ENCODE measurements at regions of chr17 and their contacts with region 1.

Region 1: GRCh38 chr17:82022981-82023374 is at the start of gene LRRC45:
- DNase-seq: peak; percentile 100
- H3K4me3 ChIP-seq: peak within 1 kb of the TSS; percentile 63 to 92 (median 88)
- H3K27ac ChIP-seq: peak within 1 kb of the TSS; percentile 15
- H3K4me1 ChIP-seq: peaks cover 32% of the 10 kb centered on the region
- H3K27me3 ChIP-seq: no peaks in the 10 kb centered on the region
- CTCF ChIP-seq: no peak
- total RNA-seq, gene LRRC45: 4.5 to 10.9 TPM

Region 2: DNA sequence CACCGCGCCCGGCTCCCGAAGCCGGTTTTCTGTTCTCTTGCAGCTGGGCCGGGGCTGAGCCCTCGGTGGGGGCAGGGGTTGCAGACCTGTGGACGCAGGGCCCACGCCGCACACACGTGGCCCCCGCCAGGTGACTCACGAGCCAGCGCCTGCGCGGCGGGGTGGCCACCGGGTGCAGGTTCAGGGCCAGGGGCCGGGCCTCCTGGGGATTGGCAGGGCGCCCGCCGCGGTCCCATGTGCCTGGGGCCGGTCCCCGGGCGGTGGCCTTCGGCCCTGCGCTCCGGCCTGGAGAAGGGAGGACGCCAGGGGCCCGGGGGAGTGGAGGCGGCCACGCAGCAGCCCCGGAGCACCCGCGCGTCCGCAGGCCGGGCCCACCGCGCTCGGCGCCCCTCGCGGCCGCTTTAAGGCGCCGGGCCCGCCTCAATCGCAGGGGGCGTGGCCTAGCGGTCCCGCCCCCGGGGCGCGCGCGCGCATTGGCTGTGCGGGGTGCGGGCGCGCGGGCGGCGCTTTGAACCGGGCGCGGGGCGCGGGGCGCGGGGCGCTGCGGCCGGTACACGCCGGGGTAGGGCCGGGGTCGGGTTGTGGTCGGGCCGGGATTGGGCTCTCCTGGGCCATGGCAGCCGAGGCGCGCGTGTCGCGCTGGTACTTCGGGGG is 311.0 kb before region 1 on chr17 and contains the start of gene SLC25A10:
- CTCF ChIA-PET with region 1: no interaction called
- dilution Hi-C with region 1: no loop called
- in situ Hi-C with region 1: no loop called
- intact Hi-C with region 1: loop called (anchors 5 kb)
- DNase-seq: peak; percentile 82
- H3K4me3 ChIP-seq: peak within 1 kb of the TSS; percentile 42 to 76 (median 66)
- H3K27ac ChIP-seq: peak within 1 kb of the TSS; percentile 19
- H3K4me1 ChIP-seq: peaks cover 28% of the 10 kb centered on the region
- H3K27me3 ChIP-seq: no peaks in the 10 kb centered on the region
- CTCF ChIP-seq: no peak
- total RNA-seq, gene SLC25A10: 13.0 to 19.1 TPM

Region 3: GRCh38 chr17:81911277-81911961 is 111.6 kb before region 1 on chr17 and contains the start of gene PCYT2:
- CTCF ChIA-PET with region 1: no interaction called
- dilution Hi-C with region 1: loop called (anchors 5 kb)
- in situ Hi-C with region 1: no loop called
- intact Hi-C with region 1: no loop called
- DNase-seq: peak; percentile 85
- H3K4me3 ChIP-seq: peak within 1 kb of the TSS; percentile 81 to 92 (median 83)
- H3K27ac ChIP-seq: peak within 1 kb of the TSS; percentile 19
- H3K4me1 ChIP-seq: peaks cover 12% of the 10 kb centered on the region
- H3K27me3 ChIP-seq: no peaks in the 10 kb centered on the region
- CTCF ChIP-seq: peak in 1 of 2 donors; percentile 2
- total RNA-seq, gene PCYT2: 23.5 to 48.7 TPM

Region 4: DNA sequence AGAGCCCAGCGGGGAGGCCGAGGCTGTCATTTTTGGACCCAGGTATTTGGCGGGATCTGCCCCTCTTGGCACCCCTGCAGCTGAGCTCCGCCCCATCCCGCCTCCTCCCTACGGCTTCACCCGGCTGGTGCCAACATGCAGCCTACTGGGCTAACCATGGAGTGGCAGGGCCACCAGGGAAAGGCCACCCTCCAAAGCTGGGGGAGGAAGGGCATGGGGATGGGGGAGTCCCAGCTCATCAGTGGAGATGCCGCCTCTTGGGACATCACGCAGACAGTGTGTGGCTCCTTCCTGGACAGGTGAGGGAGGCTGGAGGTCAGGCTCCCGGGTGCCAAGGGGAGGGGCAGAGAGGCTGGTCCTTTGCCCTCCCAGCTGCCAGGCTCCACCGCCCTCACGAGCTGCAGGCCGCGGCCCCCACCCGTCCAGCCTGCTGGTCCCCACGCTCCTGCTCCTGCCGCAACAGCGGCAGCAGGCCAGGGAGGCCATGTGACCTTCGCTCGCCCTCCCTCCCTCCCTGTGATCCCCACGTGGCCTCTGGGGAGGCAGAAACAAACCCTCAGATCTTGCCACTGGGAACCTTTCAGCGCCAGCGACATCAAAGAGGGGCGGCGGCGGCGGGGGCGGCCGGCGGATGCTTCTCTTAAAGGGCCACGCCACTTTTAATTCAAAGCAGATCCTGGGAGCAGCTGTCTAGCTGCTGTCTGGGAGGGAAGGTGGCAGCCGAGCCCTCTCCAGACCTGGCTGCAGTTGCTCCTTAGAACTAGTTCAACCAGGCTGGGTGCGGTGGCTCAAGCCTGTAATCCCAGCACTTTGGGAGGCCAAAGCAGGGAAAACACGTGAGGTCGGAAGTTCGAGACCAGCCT is 55.2 kb before region 1 on chr17:
- CTCF ChIA-PET with region 1: no interaction called
- dilution Hi-C with region 1: no loop called
- in situ Hi-C with region 1: loop called (anchors 5 to 10 kb)
- intact Hi-C with region 1: no loop called
- DNase-seq: no peak
- H3K4me3 ChIP-seq: no peak overlapping the region
- H3K27ac ChIP-seq: no peak overlapping the region
- H3K4me1 ChIP-seq: peaks cover 6% of the 10 kb centered on the region
- H3K27me3 ChIP-seq: no peaks in the 10 kb centered on the region
- CTCF ChIP-seq: no peak

Region 5: DNA sequence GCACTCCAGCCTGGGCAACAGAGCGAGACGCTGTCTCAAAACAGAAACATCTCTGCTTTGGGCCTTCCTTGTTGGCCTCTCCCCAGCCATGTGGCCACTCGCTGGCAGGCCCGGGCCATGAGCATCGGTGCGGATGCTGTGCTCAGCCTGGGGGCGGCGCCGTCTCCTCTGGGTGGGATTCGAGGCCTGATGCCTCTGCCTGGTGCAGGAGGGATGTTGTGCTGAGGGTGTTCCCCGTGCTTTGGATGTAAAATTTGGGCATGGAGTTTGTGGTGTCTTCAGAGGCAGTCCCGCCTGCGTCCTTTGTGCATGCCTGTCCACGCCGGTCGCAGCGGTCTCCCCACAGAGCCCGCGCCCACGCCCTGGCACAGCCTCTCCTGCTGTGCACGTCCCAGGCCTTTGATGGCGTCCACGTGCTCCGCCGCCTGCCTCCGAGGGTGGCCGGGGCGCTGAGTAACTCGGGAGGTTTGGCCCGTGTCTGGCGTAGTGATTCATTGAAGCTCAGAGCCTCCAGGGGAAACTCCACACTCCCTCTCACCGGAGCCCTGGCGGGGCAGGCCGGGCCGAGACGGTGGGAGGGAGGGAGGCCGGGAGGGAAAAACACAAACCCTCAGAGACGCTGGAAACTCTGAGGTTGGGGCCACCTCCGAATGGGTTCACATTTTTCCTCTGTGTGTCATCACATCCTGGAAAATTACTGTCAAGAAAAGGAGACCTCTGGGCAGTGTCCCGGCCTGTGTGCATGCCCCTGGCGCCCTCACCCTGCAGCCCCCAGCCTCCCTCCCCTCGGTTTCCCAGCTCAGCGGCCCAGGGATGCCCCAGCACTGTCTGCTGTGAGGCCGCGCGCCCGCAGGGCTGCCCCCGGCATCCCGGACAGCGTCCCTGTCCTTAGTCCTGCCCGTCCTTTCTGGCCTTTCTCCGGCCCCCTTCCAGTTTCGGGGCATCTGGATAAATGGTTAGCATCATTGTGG is 19.3 kb before region 1 on chr17:
- CTCF ChIA-PET with region 1: no interaction called
- dilution Hi-C with region 1: no loop called
- in situ Hi-C with region 1: no loop called
- intact Hi-C with region 1: loop called (anchors 2 kb)
- DNase-seq: peak; percentile 97
- H3K4me3 ChIP-seq: no peak overlapping the region
- H3K27ac ChIP-seq: no peak overlapping the region
- H3K4me1 ChIP-seq: peaks cover 33% of the 10 kb centered on the region
- H3K27me3 ChIP-seq: no peaks in the 10 kb centered on the region
- CTCF ChIP-seq: peak in 1 of 2 donors; percentile 2

Region 6: GRCh38 chr17:82077617-82078358 is 54.8 kb after region 1 on chr17:
- CTCF ChIA-PET with region 1: no interaction called
- dilution Hi-C with region 1: no loop called
- in situ Hi-C with region 1: no loop called
- intact Hi-C with region 1: no loop called
- DNase-seq: no peak
- H3K4me3 ChIP-seq: no peak overlapping the region
- H3K27ac ChIP-seq: no peak overlapping the region
- H3K4me1 ChIP-seq: no peaks in the 10 kb centered on the region
- H3K27me3 ChIP-seq: no peaks in the 10 kb centered on the region
- CTCF ChIP-seq: no peak